ENCODE measurements at regions of chr10 and their contacts with region 1.

Region 1: GRCh38 chr10:77641788-77642397 is 4.3 kb upstream of the KCNMA1 start:
- DNase-seq: peak; percentile 71 to 81 (median 73)
- ATAC-seq: peak; percentile 81
- H3K4me3 ChIP-seq: no peak overlapping the region
- H3K27ac ChIP-seq: no peak overlapping the region
- H3K4me1 ChIP-seq: no peaks in the 10 kb centered on the region
- H3K27me3 ChIP-seq: peaks cover 6 to 19% of the 10 kb centered on the region in 2 experiments; a peak in 3 of 5 replicates
- CTCF ChIP-seq: peak; percentile 84 to 97 (median 85)
- EP300 ChIP-seq: no peak
- POLR2A ChIP-seq: no peak
- RAD21 ChIP-seq: peak; percentile 93 to 94

Region 2: GRCh38 chr10:77101341-77101740 is 540.6 kb before region 1 on chr10:
- CTCF ChIA-PET with region 1: no interaction called
- POLR2A ChIA-PET with region 1: no interaction called
- in situ Hi-C with region 1: no loop called
- intact Hi-C with region 1: no loop called
- DNase-seq: no peak
- ATAC-seq: no peak
- H3K4me3 ChIP-seq: no peak overlapping the region
- H3K27ac ChIP-seq: no peak overlapping the region
- H3K4me1 ChIP-seq: no peaks in the 10 kb centered on the region
- H3K27me3 ChIP-seq: no peaks in the 10 kb centered on the region
- CTCF ChIP-seq: no peak
- EP300 ChIP-seq: no peak
- POLR2A ChIP-seq: no peak
- RAD21 ChIP-seq: no peak

Region 3: DNA sequence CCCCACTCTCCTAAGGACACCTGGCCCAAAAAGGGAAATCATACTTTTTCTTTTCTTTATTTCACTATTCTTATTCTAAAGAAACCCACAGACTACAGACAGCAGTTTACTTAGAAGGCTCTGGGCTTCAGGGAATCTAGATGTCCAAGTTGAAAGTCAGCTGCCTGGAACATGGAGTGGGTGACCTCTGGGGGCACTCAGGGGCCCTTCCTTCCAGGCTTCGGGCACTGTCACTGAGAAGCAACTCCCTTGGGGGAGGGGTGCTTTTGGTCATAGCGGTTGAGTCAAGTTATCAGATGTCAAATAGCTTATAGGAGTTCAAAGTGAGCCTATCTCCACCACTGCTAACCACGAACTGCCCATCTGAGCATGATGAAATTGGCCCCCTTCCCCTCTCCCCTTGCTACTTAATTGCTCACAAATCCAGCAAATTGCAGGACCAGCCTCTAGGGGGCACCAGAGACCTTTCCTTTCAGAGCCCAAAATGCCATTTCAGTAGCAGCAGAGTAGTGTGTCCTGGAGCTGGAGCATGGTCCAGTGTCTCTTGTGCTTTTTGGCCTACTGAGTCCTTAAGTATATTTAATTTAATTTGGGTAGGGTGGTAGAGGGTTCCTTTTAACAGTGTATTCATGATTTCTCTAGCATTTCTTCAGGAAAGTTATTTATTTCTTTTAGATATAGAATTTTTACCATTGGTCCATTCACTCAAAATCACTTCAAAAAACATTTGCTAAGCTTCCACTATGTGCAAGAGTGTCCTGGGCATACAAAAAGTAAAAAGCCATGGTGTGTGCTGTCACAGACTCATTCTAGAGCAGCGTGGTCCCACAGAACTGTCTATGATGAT is 468.1 kb before region 1 on chr10:
- CTCF ChIA-PET with region 1: interaction called, 25 read pairs
- POLR2A ChIA-PET with region 1: no interaction called
- in situ Hi-C with region 1: loop called (anchors 5 kb)
- intact Hi-C with region 1: loop called (anchors 1 kb)
- DNase-seq: peak; percentile 78 to 83 (median 81)
- ATAC-seq: peak; percentile 95
- H3K4me3 ChIP-seq: no peak overlapping the region
- H3K27ac ChIP-seq: no peak overlapping the region
- H3K4me1 ChIP-seq: no peaks in the 10 kb centered on the region
- H3K27me3 ChIP-seq: peaks cover 3 to 5% of the 10 kb centered on the region in 2 experiments; a peak in 3 of 5 replicates
- CTCF ChIP-seq: peak; percentile 90 to 96 (median 93)
- EP300 ChIP-seq: no peak
- POLR2A ChIP-seq: no peak
- RAD21 ChIP-seq: peak; percentile 77 to 87

Region 4: DNA sequence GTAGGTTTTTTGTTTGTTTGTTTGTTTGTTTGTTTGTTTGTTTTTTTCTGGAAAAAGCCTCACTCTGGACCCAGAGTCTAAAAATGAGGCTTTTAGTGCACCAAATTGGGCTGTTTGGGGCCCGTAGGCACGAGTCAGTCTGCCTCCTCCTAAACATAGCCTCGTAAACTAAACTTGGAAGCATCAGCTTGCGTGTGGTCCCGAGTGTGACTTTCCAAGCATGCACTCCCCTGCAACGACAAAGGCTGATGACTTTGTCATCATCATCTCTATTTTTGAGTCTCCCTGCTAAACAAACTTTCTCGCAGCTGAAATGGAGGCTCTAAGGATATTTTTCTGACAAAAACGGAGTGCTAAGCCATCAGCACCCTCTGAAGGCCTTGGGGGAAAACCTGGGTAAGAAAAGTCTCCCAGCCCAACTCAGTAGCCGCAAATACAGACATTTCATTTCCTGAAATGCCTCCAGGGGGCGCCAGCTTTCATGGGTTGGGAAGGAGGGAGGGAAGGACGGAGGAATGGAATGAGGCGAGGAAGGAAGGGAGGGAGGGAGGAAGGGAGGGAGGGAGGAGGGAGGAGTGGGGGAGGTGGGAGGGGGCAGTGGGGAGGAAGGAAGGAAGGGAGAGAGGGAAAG is 250.2 kb before region 1 on chr10:
- CTCF ChIA-PET with region 1: interaction called, 12 read pairs
- POLR2A ChIA-PET with region 1: no interaction called
- in situ Hi-C with region 1: loop called (anchors 25 kb)
- intact Hi-C with region 1: loop called (anchors 1 kb)
- DNase-seq: peak; percentile 69 to 82 (median 78)
- ATAC-seq: peak; percentile 91
- H3K4me3 ChIP-seq: no peak overlapping the region
- H3K27ac ChIP-seq: no peak overlapping the region
- H3K4me1 ChIP-seq: no peaks in the 10 kb centered on the region
- H3K27me3 ChIP-seq: peaks cover 0 to 2% of the 10 kb centered on the region in 2 experiments; a peak in 1 of 5 replicates
- CTCF ChIP-seq: peak; percentile 67 to 78 (median 72)
- EP300 ChIP-seq: no peak
- POLR2A ChIP-seq: no peak
- RAD21 ChIP-seq: peak; percentile 46 to 70

Region 5: GRCh38 chr10:77531441-77532001 is 110.4 kb before region 1 on chr10:
- CTCF ChIA-PET with region 1: no interaction called
- POLR2A ChIA-PET with region 1: no interaction called
- in situ Hi-C with region 1: no loop called
- intact Hi-C with region 1: loop called (anchors 10 kb)
- DNase-seq: peak in 3 of 4 experiments; percentile 19 to 34 (median 30)
- ATAC-seq: peak; percentile 81
- H3K4me3 ChIP-seq: no peak overlapping the region
- H3K27ac ChIP-seq: no peak overlapping the region
- H3K4me1 ChIP-seq: peaks cover 0 to 5% of the 10 kb centered on the region in 2 experiments; a peak in 3 of 5 replicates
- H3K27me3 ChIP-seq: peaks cover 0 to 12% of the 10 kb centered on the region in 2 experiments; a peak in 2 of 5 replicates
- CTCF ChIP-seq: no peak
- EP300 ChIP-seq: no peak
- POLR2A ChIP-seq: no peak
- RAD21 ChIP-seq: no peak

Measured in K562 (cell line).